ENCODE measurements at regions of chr22 and their contacts with region 1.

Region 1: DNA sequence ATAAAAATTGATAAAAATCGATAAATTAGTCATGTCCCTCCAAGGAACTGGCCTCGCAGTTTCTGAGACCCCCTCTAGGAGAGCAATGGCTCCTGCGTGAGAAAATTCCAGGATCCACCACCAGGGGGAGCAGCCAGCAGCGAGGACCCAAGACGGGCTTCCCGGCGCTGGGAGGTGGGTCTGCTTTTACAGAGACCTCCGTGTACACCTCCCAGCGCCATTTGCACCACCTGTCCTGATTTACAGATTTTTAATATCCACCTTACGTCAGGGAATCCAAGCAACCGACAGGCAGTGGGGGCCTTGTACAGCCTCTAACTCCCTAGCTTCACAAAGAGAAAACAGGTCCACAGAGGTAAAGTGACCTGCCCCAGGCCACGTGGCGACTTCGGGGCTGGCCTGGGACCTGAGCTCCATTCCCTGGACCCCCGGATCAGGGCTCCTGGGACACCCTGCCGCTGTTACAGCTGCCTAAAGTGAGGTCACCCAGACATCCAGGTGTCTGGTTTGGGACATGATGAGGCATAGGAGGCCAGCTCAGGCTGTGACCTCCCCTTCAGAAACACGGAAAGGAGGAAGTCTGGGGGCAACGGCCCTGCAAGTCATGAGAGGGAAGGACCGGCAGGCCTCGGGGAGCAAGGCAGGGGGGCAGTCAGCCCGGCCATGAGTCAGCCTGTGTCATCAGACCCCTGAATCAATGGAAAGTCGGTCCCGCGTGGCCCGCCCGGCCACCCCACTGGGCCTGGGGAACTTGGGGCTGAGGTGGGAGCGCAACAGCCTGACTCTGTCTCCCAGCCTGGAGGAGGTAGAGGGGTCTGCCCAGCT is 3.5 kb downstream of the OSM start:
- DNase-seq: peak; percentile 73 to 95
- H3K4me3 ChIP-seq: no peak overlapping the region
- CTCF ChIP-seq: peak in 2 of 3 donors; percentile 68 to 97
- POLR2A ChIP-seq: no peak

Region 2: DNA sequence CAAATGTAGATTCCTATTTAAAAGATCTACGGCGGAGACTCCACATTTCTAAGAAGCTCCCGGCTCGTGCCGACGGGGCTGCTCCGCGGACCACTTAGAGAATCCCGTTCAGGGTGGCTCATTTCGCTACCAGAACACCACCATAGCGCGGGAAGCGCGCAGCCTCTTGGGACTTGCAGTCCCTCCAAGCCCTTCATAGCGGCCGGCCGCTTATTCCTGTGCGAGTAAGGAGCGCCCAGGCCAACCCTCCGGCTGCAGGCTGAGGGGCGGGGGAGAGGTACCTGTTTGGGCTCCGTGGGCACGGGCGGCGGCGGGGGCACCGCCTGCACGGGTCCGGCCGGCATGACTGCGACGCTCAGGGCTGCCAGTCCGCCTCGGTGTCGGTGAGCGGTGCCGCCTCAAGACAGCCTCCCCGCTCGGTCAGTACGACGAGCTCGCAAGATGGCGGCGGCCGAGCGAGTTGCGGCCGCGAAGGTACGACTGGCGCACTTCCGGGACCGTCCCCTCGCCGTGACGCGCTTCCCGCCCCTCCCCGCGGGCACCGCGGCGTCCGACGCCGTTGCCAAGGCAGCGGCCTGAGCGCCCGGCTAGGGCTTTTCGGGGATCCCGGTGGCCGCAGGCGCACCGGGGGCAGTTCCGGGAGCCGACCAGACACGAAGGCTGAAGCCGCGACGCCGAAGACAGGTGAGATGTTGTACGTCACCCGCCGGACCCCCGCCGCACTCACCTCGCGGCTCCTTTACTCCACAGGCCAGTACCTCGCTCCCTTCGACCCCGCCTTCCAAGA is 93.5 kb after region 1 on chr22 and contains the starts of genes CCDC157 and SF3A1:
- intact Hi-C with region 1: no loop called
- DNase-seq: peak; percentile 75 to 96
- H3K4me3 ChIP-seq: peak within 1 kb of the TSS; percentile 69
- CTCF ChIP-seq: no peak
- POLR2A ChIP-seq: peak in 1 of 2 donors; percentile 52
- total RNA-seq, gene CCDC157: 0.17 to 4.5 (median 2.7) TPM
- total RNA-seq, gene SF3A1: 72.4 to 169 (median 114) TPM

Region 3: GRCh38 chr22:30485362-30485988 is 222.3 kb after region 1 on chr22:
- intact Hi-C with region 1: loop called (anchors 10 kb)
- DNase-seq: peak; percentile 33 to 91
- H3K4me3 ChIP-seq: no peak overlapping the region
- CTCF ChIP-seq: peak in 1 of 3 donors; percentile 70
- POLR2A ChIP-seq: no peak